ENCODE measurements at regions of chr17 and their contacts with region 1.

Region 1: GRCh38 chr17:44947461-44948314 is at the start of gene KIF18B:
- DNase-seq: peak; percentile 96
- H3K4me3 Mint-ChIP-seq: peak within 1 kb of the TSS; percentile 91
- H3K27ac Mint-ChIP-seq: peak within 1 kb of the TSS; percentile 84
- H3K4me1 Mint-ChIP-seq: peaks cover 9% of the 10 kb centered on the region
- H3K27me3 Mint-ChIP-seq: peaks cover 6% of the 10 kb centered on the region
- total RNA-seq, gene KIF18B: 36.2 to 42.9 TPM

Region 2: DNA sequence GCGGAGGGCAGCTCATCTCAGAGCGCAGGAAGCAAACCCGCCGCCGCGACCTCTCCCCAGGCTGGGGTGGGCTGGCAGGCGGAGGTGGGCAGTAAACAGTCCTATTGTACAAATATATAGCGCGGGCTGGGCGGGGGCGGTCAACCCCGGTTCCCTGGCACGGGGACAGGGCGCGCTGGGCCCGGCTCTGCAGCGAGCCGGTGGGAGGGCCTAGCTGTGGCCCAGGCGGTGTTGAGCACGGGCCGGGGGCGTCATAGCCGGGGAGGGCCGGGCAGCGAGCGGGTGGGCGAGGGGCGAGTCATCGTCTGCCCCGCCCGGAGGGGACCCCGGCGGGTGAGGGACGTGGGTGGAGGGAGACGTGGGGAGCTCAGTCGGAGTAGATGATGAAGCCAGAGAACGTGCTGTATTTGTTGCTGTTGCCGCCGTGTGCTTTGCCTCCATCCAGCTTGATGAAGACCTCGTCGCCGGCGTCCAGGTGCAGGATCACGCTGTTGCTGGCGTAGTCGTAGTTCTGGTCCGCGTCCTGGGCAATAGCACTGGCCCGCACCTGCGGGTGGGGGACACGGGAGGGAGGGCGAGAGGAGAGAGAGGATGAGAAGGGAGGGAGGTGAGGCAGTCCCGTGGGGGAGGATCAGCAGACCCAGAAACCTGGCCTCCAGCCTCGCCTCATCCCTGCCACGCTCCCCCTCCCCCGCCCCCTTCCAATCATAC is 12.3 kb after region 1 on chr17:
- CTCF ChIA-PET with region 1: no interaction called
- POLR2A ChIA-PET with region 1: no interaction called
- intact Hi-C with region 1: no loop called
- DNase-seq: peak; percentile 16
- H3K4me3 Mint-ChIP-seq: no peak overlapping the region
- H3K27ac Mint-ChIP-seq: no peak overlapping the region
- H3K4me1 Mint-ChIP-seq: peaks cover 4% of the 10 kb centered on the region
- H3K27me3 Mint-ChIP-seq: peaks cover 32% of the 10 kb centered on the region

Region 3: GRCh38 chr17:44970136-44970737 is 22.5 kb after region 1 on chr17:
- CTCF ChIA-PET with region 1: no interaction called
- POLR2A ChIA-PET with region 1: no interaction called
- intact Hi-C with region 1: loop called (anchors 1 kb)
- DNase-seq: peak; percentile 49
- H3K4me3 Mint-ChIP-seq: peak overlapping the region; percentile 26
- H3K27ac Mint-ChIP-seq: no peak overlapping the region
- H3K4me1 Mint-ChIP-seq: peaks cover 37% of the 10 kb centered on the region
- H3K27me3 Mint-ChIP-seq: peaks cover 46% of the 10 kb centered on the region

Region 4: DNA sequence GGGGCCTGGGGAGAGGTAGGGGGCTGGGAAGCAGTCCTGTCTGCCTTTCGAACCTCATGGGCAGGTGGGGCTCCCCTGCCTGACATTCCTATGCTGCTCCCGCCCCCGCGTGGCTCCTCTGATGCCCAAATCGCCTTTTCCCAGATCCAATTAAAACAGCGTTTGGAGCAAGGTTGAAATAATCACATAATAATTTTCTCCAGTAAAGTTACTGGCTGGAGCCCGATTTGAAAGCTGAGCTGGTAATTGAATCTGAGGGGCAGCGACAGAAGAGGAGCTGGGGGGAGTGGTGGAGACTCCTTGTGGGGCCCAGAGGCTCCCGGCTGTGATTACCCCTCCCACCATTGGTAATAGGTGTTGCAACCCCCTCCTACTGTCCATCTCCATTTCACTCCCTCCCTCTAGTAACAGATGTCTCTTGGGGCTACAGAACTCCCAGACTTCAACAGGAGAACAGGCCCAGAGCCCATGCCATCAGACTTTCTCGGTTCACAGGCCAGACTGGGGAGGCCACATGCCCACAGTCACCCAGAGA is 59.3 kb after region 1 on chr17:
- CTCF ChIA-PET with region 1: no interaction called
- POLR2A ChIA-PET with region 1: no interaction called
- intact Hi-C with region 1: no loop called
- DNase-seq: no peak
- H3K4me3 Mint-ChIP-seq: no peak overlapping the region
- H3K27ac Mint-ChIP-seq: no peak overlapping the region
- H3K4me1 Mint-ChIP-seq: no peaks in the 10 kb centered on the region
- H3K27me3 Mint-ChIP-seq: peaks cover 7% of the 10 kb centered on the region

Region 5: GRCh38 chr17:45051060-45051719 is 103.5 kb after region 1 on chr17 and contains the start of gene DCAKD:
- CTCF ChIA-PET with region 1: no interaction called
- POLR2A ChIA-PET with region 1: no interaction called
- intact Hi-C with region 1: loop called (anchors 2 kb)
- DNase-seq: peak; percentile 95
- H3K4me3 Mint-ChIP-seq: peak within 1 kb of the TSS; percentile 93
- H3K27ac Mint-ChIP-seq: peak within 1 kb of the TSS; percentile 94
- H3K4me1 Mint-ChIP-seq: peaks cover 45% of the 10 kb centered on the region
- H3K27me3 Mint-ChIP-seq: no peaks in the 10 kb centered on the region
- total RNA-seq, gene DCAKD: 32.0 to 34.0 TPM